HEK293 (cell line): ENCODE measurements at regions of chr6 and their contacts with region 1.

Region 1: GRCh38 chr6:7276199-7276524 is 36.8 kb downstream of the SSR1 start:
- H3K4me3 ChIP-seq: no peak overlapping the region
- H3K27ac ChIP-seq: no peak overlapping the region
- H3K4me1 ChIP-seq: no peaks in the 10 kb centered on the region
- CTCF ChIP-seq: no peak

Region 2: GRCh38 chr6:7261032-7261841 is 14.9 kb before region 1 on chr6:
- CTCF ChIA-PET with region 1: interaction called, 16 read pairs
- POLR2A ChIA-PET with region 1: interaction called, 6 read pairs
- H3K4me3 ChIP-seq: peak overlapping the region; percentile 60
- H3K27ac ChIP-seq: peak overlapping the region; percentile 27; the same call in 1 of the 2 replicates
- H3K4me1 ChIP-seq: peaks cover 2% of the 10 kb centered on the region; the same call in 1 of the 2 replicates
- CTCF ChIP-seq: no peak

Region 3: GRCh38 chr6:7295916-7296315 is 19.8 kb after region 1 on chr6:
- CTCF ChIA-PET with region 1: interaction called, 11 read pairs
- POLR2A ChIA-PET with region 1: no interaction called
- H3K4me3 ChIP-seq: no peak overlapping the region
- H3K27ac ChIP-seq: no peak overlapping the region
- H3K4me1 ChIP-seq: no peaks in the 10 kb centered on the region
- CTCF ChIP-seq: no peak

Region 4: GRCh38 chr6:7389451-7390225 is 113.5 kb after region 1 on chr6 and contains the starts of genes CAGE1 and RIOK1:
- CTCF ChIA-PET with region 1: interaction called, 26 read pairs
- POLR2A ChIA-PET with region 1: interaction called, 8 read pairs
- H3K4me3 ChIP-seq: peak within 1 kb of the TSS; percentile 70
- H3K27ac ChIP-seq: peak within 1 kb of the TSS; percentile 93
- H3K4me1 ChIP-seq: peaks cover 7% of the 10 kb centered on the region
- CTCF ChIP-seq: peak; percentile 85

Region 5: GRCh38 chr6:7615611-7616383 is 339.6 kb after region 1 on chr6:
- CTCF ChIA-PET with region 1: interaction called, 59 read pairs
- POLR2A ChIA-PET with region 1: interaction called, 3 read pairs
- H3K4me3 ChIP-seq: no peak overlapping the region
- H3K27ac ChIP-seq: no peak overlapping the region
- H3K4me1 ChIP-seq: 0 out of 2 replicates have a peak, but pooled peaks cover 2% of the 10 kb centered on the region
- CTCF ChIP-seq: peak; percentile 35

Region 6: DNA sequence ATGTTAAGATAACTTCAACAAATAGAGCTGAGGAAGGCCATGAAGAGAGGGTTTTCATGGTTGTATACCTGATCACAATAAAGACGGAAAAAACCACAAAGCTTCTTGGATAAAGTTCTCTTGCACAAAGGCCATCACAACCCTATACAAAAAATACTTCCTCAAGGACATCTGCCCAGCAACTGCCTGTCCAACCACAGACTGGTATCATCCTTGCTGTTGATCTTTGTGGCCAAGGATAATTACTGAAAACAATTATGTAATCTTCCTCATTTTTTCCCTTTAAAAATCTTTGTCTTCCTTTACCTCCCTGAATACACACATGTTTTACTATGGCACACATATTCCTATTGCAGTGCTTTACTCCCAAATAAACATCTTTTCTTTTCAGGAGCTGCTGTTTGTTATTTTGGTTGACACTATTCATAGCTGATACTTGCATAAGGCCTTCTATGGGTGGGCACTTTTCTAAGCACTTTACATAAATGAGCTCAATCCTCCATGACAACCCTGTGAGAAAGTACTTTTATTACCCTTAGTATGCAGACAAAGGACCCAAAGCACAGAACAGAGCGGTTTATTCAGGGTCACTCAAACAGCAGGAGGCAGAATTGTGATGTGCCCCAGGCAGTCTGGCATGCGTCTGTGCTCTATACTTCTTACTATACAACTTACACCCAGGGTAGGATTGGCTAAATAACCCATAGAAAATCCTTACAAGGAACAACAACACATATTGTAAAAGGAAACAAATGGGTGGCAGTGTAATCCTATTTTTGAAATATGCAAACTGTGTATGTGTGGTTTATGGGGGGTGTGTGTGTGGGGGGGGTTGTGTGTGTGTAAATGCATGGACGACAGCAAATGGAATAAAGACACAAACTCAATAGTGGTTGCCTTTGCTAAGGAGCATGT is 348.9 kb after region 1 on chr6:
- CTCF ChIA-PET with region 1: interaction called, 11 read pairs
- POLR2A ChIA-PET with region 1: no interaction called
- H3K4me3 ChIP-seq: no peak overlapping the region
- H3K27ac ChIP-seq: no peak overlapping the region
- H3K4me1 ChIP-seq: peaks cover 7% of the 10 kb centered on the region; the same call in 1 of the 2 replicates
- CTCF ChIP-seq: no peak